IMR-90 (cell line): ENCODE measurements at regions of chr19 and their contacts with region 1.

Region 1: DNA sequence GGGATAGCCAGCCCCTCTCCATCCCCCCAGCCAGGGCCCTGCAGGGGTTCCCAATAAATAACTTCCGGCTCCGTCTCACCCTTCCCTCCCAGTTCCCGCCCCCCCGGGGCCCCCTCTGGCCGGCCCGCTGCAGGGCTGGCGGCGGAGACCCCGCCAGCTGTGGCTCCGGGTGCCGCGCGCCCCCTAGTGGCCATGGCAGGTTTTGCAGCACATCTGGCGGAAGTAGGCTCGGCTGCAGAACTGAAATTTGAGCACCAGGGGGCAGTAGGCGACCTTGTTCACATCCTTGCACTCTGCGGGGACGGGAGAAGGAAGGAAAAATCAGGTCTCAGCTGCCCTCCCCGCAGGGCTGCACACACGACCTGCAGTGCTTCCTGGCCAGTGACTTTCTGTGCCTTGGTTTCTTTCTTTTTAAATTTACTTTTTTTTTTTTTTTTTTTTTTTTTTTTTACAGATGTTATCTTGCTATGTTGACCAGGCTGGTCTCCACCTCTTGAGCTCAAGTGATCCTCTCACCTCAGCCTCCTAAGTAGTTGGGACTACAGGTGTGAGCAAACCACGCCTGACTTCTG is 3.6 kb upstream of the MYO1F start:
- DNase-seq: peak; percentile 66
- ATAC-seq: peak; percentile 84
- H3K4me3 ChIP-seq: no peak overlapping the region
- H3K27ac ChIP-seq: no peak overlapping the region
- H3K4me1 ChIP-seq: peaks cover 1% of the 10 kb centered on the region
- H3K27me3 ChIP-seq: no peaks in the 10 kb centered on the region
- CTCF ChIP-seq: peak; percentile 100; the same call in 1 of the 2 replicates
- POLR2A ChIP-seq: no peak
- RAD21 ChIP-seq: peak; percentile 87

Region 2: GRCh38 chr19:8261347-8262310 is 319.2 kb before region 1 on chr19:
- CTCF ChIA-PET with region 1: no interaction called
- POLR2A ChIA-PET with region 1: no interaction called
- dilution Hi-C with region 1: no loop called
- in situ Hi-C with region 1: no loop called
- intact Hi-C with region 1: loop called (anchors 10 kb)
- DNase-seq: no peak
- ATAC-seq: no peak
- H3K4me3 ChIP-seq: no peak overlapping the region
- H3K27ac ChIP-seq: no peak overlapping the region
- H3K4me1 ChIP-seq: no peaks in the 10 kb centered on the region
- H3K27me3 ChIP-seq: no peaks in the 10 kb centered on the region
- CTCF ChIP-seq: no peak
- POLR2A ChIP-seq: no peak
- RAD21 ChIP-seq: no peak

Region 3: DNA sequence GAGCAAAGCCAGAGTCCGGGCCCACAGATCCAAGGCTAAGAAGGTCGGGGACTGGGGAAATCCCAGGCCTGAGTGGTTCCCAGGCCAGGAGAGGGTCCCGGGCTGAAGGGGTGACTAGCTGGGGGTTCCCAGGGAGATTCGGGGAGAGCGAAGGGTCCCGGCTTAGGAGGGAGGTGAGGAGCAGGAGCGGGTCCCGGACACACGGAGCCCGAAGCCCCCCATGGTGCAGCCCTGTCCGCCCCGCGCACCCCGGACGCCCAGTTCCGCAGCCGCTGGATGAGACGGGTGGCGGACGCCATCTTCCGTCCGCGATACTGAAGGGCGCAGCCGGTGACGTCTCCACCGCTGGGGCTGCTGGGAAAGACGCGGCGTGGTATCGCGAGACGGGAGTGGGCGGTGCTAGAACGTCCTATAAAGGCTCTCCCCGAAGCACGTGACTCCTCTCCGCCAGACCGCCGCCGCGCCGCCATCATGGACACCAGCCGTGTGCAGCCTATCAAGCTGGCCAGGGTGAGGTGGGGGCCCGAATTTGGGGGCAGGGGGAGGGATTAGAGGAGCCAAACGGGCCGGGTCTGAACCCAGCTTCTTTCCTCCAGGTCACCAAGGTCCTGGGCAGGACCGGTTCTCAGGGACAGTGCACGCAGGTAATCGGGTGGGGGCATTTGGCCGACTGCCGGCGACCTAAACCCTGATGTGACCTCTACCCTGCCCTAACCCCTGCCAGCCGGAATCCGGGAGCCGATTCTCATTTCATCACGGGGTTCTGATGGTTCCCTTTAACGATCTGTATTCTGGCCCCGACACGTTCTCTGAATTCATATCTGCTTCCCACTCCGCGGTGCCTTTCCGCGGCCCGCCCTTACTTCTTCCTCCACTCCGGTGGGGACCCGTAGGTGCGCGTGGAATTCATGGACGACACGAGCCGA is 259.5 kb before region 1 on chr19 and contains the starts of genes NDUFA7 and RPS28:
- CTCF ChIA-PET with region 1: no interaction called
- POLR2A ChIA-PET with region 1: no interaction called
- dilution Hi-C with region 1: no loop called
- in situ Hi-C with region 1: loop called (anchors 5 kb)
- intact Hi-C with region 1: no loop called
- DNase-seq: peak; percentile 94
- ATAC-seq: peak; percentile 94
- H3K4me3 ChIP-seq: peak within 1 kb of the TSS; percentile 82
- H3K27ac ChIP-seq: peak within 1 kb of the TSS; percentile 86
- H3K4me1 ChIP-seq: peaks cover 9% of the 10 kb centered on the region
- H3K27me3 ChIP-seq: no peaks in the 10 kb centered on the region
- CTCF ChIP-seq: peak; percentile 36
- POLR2A ChIP-seq: peak; percentile 93
- RAD21 ChIP-seq: peak; percentile 31; the same call in 1 of the 2 replicates
- total RNA-seq, gene NDUFA7: 15.8 and 20.6 TPM in 2 replicates
- total RNA-seq, gene RPS28: 104 and 143 TPM in 2 replicates

Region 4: GRCh38 chr19:8355631-8356402 is 225.0 kb before region 1 on chr19:
- CTCF ChIA-PET with region 1: interaction called, 4 read pairs
- POLR2A ChIA-PET with region 1: no interaction called
- dilution Hi-C with region 1: no loop called
- in situ Hi-C with region 1: no loop called
- intact Hi-C with region 1: loop called (anchors 2 kb)
- DNase-seq: peak; percentile 98
- ATAC-seq: peak; percentile 90
- H3K4me3 ChIP-seq: no peak overlapping the region
- H3K27ac ChIP-seq: no peak overlapping the region; the same call in 1 of the 2 replicates
- H3K4me1 ChIP-seq: no peaks in the 10 kb centered on the region
- H3K27me3 ChIP-seq: no peaks in the 10 kb centered on the region
- CTCF ChIP-seq: no peak
- POLR2A ChIP-seq: no peak
- RAD21 ChIP-seq: peak; percentile 18

Region 5: GRCh38 chr19:8412783-8413628 is 167.8 kb before region 1 on chr19 and contains the start of gene MARCHF2:
- CTCF ChIA-PET with region 1: interaction called, 6 read pairs
- POLR2A ChIA-PET with region 1: no interaction called
- dilution Hi-C with region 1: no loop called
- in situ Hi-C with region 1: no loop called
- intact Hi-C with region 1: loop called (anchors 5 kb)
- DNase-seq: peak; percentile 97
- ATAC-seq: peak; percentile 100
- H3K4me3 ChIP-seq: peak within 1 kb of the TSS; percentile 67
- H3K27ac ChIP-seq: no peak within 1 kb of the TSS; the same call in 1 of the 2 replicates
- H3K4me1 ChIP-seq: peaks cover 4% of the 10 kb centered on the region
- H3K27me3 ChIP-seq: no peaks in the 10 kb centered on the region
- CTCF ChIP-seq: peak; percentile 74
- POLR2A ChIP-seq: no peak
- RAD21 ChIP-seq: peak; percentile 43
- total RNA-seq, gene MARCHF2: 48.6 and 58.8 TPM in 2 replicates

Region 6: DNA sequence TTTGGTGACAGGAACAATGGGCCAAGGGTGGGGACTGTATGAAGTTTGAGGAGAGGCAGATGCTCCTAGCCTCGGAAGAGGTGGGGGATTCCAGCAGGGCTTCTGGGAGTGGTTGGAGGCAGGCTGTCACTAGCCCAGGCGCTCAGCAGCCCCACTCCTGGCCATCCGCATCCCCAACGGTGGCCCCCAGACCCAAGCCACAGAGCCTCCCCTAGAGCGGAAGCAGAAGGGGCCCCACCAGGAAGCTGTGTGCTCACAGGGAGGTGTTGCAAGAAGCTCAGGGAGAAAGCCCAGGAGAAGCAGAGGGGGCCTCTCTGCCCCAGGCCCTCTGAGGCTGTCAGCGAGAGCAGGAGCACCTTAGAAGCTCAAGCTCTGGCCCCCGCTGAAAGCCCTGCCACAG is 86.6 kb before region 1 on chr19:
- CTCF ChIA-PET with region 1: no interaction called
- POLR2A ChIA-PET with region 1: no interaction called
- dilution Hi-C with region 1: no loop called
- in situ Hi-C with region 1: no loop called
- intact Hi-C with region 1: no loop called
- DNase-seq: no peak
- ATAC-seq: no peak
- H3K4me3 ChIP-seq: no peak overlapping the region
- H3K27ac ChIP-seq: no peak overlapping the region
- H3K4me1 ChIP-seq: no peaks in the 10 kb centered on the region; the same call in 1 of the 2 replicates
- H3K27me3 ChIP-seq: no peaks in the 10 kb centered on the region
- CTCF ChIP-seq: no peak
- POLR2A ChIP-seq: no peak
- RAD21 ChIP-seq: no peak

Region 7: GRCh38 chr19:8569066-8569771 is 11.6 kb before region 1 on chr19:
- CTCF ChIA-PET with region 1: interaction called, 14 read pairs
- POLR2A ChIA-PET with region 1: no interaction called
- dilution Hi-C with region 1: no loop called
- in situ Hi-C with region 1: no loop called
- intact Hi-C with region 1: no loop called
- DNase-seq: peak; percentile 96
- ATAC-seq: peak; percentile 83
- H3K4me3 ChIP-seq: no peak overlapping the region
- H3K27ac ChIP-seq: peak overlapping the region; percentile 63
- H3K4me1 ChIP-seq: peaks cover 12% of the 10 kb centered on the region
- H3K27me3 ChIP-seq: no peaks in the 10 kb centered on the region
- CTCF ChIP-seq: no peak; the same call in 1 of the 2 replicates
- POLR2A ChIP-seq: no peak
- RAD21 ChIP-seq: 0 out of 2 replicates have a peak, but pooled peaks have one; percentile 14

Region 8: DNA sequence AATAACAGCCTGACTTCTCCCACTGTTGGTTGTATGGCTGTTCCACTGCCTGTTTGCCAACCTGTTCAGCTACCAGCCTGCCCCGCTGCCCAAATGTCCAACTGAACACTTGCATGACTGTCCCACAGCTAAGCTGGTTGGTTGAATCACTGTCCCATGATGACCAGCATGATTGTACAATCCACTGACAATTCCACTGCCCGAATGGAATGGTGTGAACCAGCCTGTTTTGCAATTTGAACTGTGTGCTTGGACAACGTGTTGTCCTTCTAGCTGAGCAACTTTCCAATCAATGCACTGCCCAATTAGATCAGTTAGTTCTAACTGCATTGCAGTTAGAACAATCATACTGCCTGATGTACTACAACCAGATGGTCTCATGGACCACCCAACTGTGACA is 21.0 kb after region 1 on chr19:
- CTCF ChIA-PET with region 1: no interaction called
- POLR2A ChIA-PET with region 1: no interaction called
- dilution Hi-C with region 1: no loop called
- in situ Hi-C with region 1: no loop called
- intact Hi-C with region 1: no loop called
- DNase-seq: no peak
- ATAC-seq: no peak
- H3K4me3 ChIP-seq: no peak overlapping the region
- H3K27ac ChIP-seq: no peak overlapping the region
- H3K4me1 ChIP-seq: no peaks in the 10 kb centered on the region
- H3K27me3 ChIP-seq: no peaks in the 10 kb centered on the region
- CTCF ChIP-seq: no peak
- POLR2A ChIP-seq: no peak
- RAD21 ChIP-seq: no peak

Region 9: GRCh38 chr19:8641908-8642547 is 61.2 kb after region 1 on chr19:
- CTCF ChIA-PET with region 1: interaction called, 13 read pairs
- POLR2A ChIA-PET with region 1: no interaction called
- dilution Hi-C with region 1: no loop called
- in situ Hi-C with region 1: no loop called
- intact Hi-C with region 1: loop called (anchors 2 kb)
- DNase-seq: peak; percentile 65
- ATAC-seq: peak; percentile 71
- H3K4me3 ChIP-seq: no peak overlapping the region
- H3K27ac ChIP-seq: no peak overlapping the region
- H3K4me1 ChIP-seq: peaks cover 6% of the 10 kb centered on the region
- H3K27me3 ChIP-seq: peaks cover 10% of the 10 kb centered on the region
- CTCF ChIP-seq: peak; percentile 64
- POLR2A ChIP-seq: no peak
- RAD21 ChIP-seq: peak; percentile 61

Region 10: GRCh38 chr19:8858260-8858659 is 277.5 kb after region 1 on chr19:
- CTCF ChIA-PET with region 1: no interaction called
- POLR2A ChIA-PET with region 1: no interaction called
- dilution Hi-C with region 1: no loop called
- in situ Hi-C with region 1: no loop called
- intact Hi-C with region 1: no loop called
- DNase-seq: no peak
- ATAC-seq: no peak
- H3K4me3 ChIP-seq: no peak overlapping the region
- H3K27ac ChIP-seq: no peak overlapping the region
- H3K4me1 ChIP-seq: no peaks in the 10 kb centered on the region
- H3K27me3 ChIP-seq: no peaks in the 10 kb centered on the region
- CTCF ChIP-seq: no peak
- POLR2A ChIP-seq: no peak
- RAD21 ChIP-seq: no peak